ENCODE measurements at regions of chr12 and their contacts with region 1.

Region 1: DNA sequence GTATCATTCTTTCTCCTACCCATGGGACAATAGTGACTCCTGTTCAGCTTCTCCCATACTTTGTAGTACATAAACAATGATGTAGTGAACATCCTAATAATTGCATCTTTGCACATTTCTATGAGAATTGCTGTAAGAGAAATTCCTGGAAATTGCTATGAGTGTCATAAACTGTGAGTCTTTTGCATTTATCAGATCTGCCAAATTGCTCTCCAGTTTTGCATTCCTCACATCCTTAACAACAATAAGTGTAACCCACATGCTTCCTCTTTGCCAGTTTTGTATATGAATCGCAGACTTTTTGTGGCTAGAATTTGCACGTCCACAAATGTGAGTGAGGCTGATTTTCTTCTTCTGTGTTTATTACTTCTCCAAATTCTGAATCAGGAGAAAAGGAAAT is 124.0 kb upstream of the TBX5 start:
- DNase-seq: no peak
- H3K4me3 ChIP-seq: no peak overlapping the region
- H3K27ac ChIP-seq: no peak overlapping the region
- H3K27me3 ChIP-seq: peaks cover under 1% of the 10 kb centered on the region
- CTCF ChIP-seq: no peak

Region 2: GRCh38 chr12:114784526-114784925 is 254.6 kb after region 1 on chr12:
- CTCF ChIA-PET with region 1: no interaction called
- POLR2A ChIA-PET with region 1: no interaction called
- DNase-seq: no peak
- H3K4me3 ChIP-seq: no peak overlapping the region
- H3K27ac ChIP-seq: no peak overlapping the region
- H3K27me3 ChIP-seq: no peaks in the 10 kb centered on the region
- CTCF ChIP-seq: no peak

Region 3: DNA sequence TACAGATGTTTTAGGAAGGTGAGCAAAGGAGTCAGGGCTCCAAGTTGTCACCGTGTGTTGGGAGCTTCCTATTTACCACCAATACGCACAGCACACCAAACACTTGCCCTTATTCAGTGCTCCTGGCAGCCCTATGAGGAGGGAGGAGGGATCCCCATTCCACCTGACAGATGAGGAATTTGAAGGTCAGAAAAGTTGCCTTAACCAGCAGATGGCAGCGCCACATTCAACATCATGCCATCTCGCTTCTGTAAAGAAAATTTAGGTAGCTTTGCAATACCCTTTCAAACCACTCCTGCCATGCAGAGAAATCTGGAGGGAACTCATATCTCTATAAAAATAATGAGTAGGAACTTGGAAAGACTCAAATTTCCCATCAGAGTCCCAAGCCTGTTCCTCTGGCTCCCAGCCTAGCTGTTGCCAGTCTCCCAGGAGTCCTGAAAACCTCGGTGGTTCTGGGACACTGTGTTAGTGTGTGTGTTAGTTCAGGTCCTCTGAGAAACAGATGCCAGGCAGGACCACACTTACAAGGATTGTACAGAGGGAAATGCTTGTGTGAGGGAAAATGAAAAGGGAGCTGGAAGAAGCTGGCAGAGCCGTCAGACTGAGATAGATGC is 1337.1 kb after region 1 on chr12:
- CTCF ChIA-PET with region 1: interaction called, 15 read pairs
- POLR2A ChIA-PET with region 1: no interaction called
- DNase-seq: no peak
- H3K4me3 ChIP-seq: no peak overlapping the region
- H3K27ac ChIP-seq: no peak overlapping the region
- H3K27me3 ChIP-seq: no peaks in the 10 kb centered on the region
- CTCF ChIP-seq: no peak